AG04450 (cell line): ENCODE measurements at regions of chr13 and their contacts with region 1.

Region 1: GRCh38 chr13:25375727-25376358 is 4.1 kb downstream of the ATP8A2 start:
- DNase-seq: peak; percentile 10
- H3K4me3 ChIP-seq: no peak overlapping the region
- H3K27ac ChIP-seq: no peak overlapping the region
- H3K27me3 ChIP-seq: peaks cover 31% of the 10 kb centered on the region
- CTCF ChIP-seq: peak; percentile 72

Region 2: DNA sequence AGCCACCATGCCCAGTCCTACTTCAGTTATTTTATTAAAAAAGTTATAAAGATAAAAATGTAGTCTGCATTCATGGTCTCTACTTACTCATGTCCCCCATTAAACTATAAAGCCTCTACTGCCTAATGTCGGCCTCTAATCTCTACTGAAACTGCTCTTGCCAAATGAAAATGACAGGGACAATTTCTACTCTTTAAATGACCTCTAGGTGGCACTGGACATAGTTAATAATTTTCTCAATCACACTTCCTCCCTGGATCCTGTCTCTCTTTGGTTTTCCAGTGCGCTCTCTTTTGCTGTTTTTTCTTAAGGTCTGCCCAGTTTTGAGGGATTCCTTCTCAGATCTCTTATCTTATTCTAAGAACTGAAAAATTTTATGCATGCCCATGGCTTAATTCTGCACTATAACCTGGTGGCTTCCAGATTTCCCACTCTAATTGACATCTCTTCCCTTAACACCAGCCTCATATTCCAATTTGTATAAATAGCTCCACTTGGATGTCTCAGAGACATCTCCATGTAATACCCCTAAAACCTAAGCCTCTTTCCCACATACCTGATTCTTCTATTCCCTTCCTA is 142.8 kb before region 1 on chr13:
- CTCF ChIA-PET with region 1: interaction called, 28 read pairs
- POLR2A ChIA-PET with region 1: no interaction called
- DNase-seq: no peak
- H3K4me3 ChIP-seq: no peak overlapping the region
- H3K27ac ChIP-seq: no peak overlapping the region
- H3K27me3 ChIP-seq: peaks cover 5% of the 10 kb centered on the region
- CTCF ChIP-seq: peak; percentile 50

Region 3: DNA sequence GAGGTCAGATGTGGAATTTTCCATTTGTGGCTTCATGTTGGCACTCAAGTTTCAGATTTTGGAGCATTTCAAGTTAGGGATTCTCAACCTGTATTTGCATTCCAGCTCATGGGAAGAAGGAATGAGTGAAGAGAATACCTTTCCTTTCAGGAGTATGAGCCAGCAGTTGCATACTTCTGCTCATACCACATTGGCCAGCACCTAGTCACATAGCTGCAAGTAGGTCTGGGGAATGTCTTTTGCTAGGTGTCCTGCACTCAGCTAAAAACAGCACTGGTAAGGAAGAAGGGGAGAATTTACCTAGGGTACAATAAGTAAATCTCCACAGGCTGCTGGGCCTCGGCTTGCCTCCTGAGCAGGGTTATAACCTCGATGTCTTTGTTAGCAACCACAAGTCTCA is 28.7 kb before region 1 on chr13:
- CTCF ChIA-PET with region 1: interaction called, 12 read pairs
- POLR2A ChIA-PET with region 1: no interaction called
- DNase-seq: no peak
- H3K4me3 ChIP-seq: no peak overlapping the region
- H3K27ac ChIP-seq: no peak overlapping the region
- H3K27me3 ChIP-seq: no peaks in the 10 kb centered on the region
- CTCF ChIP-seq: no peak

Region 4: DNA sequence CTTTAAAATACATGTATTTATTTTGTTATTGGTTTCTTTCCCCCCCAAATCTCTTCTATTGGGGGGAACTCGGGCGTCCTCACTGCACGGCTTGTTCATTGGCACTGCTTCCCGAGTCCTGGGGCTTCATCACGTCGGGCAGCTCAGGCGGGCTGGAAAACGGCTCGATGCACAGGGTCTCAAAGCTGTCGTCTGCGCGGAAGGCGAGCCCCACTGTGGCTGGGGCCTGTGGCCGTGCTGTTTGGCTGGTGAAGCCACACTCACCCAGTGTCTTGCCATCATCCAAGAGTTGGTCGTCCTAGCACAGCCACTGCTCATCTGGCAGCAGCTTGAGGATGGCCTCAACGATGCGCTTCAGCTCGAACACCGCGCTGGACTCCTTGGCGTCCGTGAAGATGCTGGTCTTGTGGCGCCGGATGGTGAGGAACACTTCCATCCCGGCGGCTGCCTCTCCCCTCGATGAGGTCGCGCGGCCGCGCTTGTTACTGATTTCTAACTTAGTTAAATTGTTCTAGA is 10.1 kb before region 1 on chr13:
- CTCF ChIA-PET with region 1: interaction called, 16 read pairs
- POLR2A ChIA-PET with region 1: no interaction called
- DNase-seq: no peak
- H3K4me3 ChIP-seq: no peak overlapping the region
- H3K27ac ChIP-seq: no peak overlapping the region
- H3K27me3 ChIP-seq: peaks cover 15% of the 10 kb centered on the region
- CTCF ChIP-seq: no peak